ENCODE measurements at regions of chr16 and their contacts with region 1.

Region 1: DNA sequence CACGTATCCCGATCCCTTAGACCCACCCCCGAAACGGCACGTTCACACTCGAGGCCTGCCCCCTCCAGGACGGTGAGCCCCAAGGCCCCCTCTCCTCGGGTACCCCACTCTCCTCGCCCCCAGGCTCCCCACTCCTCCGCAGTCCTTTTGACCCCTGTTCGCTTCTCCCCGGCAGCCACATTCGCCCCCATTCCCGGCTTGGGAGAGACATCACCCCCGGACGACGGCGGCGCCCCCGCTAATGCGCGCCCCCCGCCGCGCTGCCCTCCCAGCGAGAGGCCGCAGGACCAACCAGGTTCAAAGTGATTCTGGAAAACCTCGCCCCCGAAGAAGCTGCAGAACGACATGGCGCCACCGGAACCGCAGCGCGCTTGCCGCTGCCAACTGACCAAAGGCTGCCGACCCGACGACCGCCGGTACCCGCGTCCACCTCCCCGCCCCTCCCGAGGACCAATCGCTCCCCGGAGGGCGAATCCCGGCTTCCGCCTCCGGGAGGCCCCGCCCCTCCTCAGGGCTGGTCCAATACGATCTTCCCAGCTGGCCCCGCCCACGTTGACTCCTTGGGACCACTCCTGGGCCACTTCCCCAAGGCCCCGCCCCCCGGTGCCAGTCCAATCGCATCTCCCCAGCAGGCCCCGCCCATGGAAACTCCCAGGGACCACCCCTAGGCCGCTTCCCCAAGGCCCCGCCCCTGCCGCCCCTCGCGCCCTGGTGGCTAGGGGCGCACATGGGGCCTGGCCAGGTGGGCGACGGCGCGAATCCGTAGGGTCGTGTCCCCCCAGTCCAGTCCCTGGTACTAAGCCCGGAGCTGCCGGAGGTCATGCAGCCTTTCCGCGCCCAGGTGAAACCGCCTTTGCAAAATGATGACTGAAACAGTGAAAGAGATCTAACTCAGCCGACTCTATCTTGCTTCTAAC is at the start of gene MSRB1:
- DNase-seq: peak; percentile 98
- ATAC-seq: peak; percentile 56
- H3K4me3 ChIP-seq: peak within 1 kb of the TSS; percentile 93 to 97 (median 96)
- H3K27ac ChIP-seq: peak within 1 kb of the TSS; percentile 96
- H3K4me1 ChIP-seq: peaks cover 68% of the 10 kb centered on the region
- H3K27me3 ChIP-seq: peaks cover 0 to 5% of the 10 kb centered on the region in 2 experiments; a peak in 1 of 5 replicates
- CTCF ChIP-seq: peak; percentile 19; the same call in 1 of the 2 replicates
- EP300 ChIP-seq: no peak
- POLR2A ChIP-seq: peak; percentile 95
- RAD21 ChIP-seq: no peak
- total RNA-seq, gene MSRB1: 32.1 and 49.0 TPM in 2 replicates

Region 2: GRCh38 chr16:1782352-1783091 is 160.5 kb before region 1 on chr16 and contains the starts of genes NUBP2 and SPSB3:
- CTCF ChIA-PET with region 1: no interaction called
- POLR2A ChIA-PET with region 1: interaction called, 16 read pairs
- in situ Hi-C with region 1: no loop called
- intact Hi-C with region 1: no loop called
- DNase-seq: peak; percentile 99
- ATAC-seq: peak; percentile 90
- H3K4me3 ChIP-seq: peak within 1 kb of the TSS; percentile 94 to 96 (median 94)
- H3K27ac ChIP-seq: peak within 1 kb of the TSS; percentile 70
- H3K4me1 ChIP-seq: peaks cover 22% of the 10 kb centered on the region
- H3K27me3 ChIP-seq: peaks cover 0 to 2% of the 10 kb centered on the region in 2 experiments; a peak in 1 of 5 replicates
- CTCF ChIP-seq: no peak
- EP300 ChIP-seq: no peak
- POLR2A ChIP-seq: peak; percentile 41 to 74; a peak in 3 of 4 replicates
- RAD21 ChIP-seq: no peak; the same call in 1 of the 2 replicates
- total RNA-seq, gene NUBP2: 43.8 and 61.5 TPM in 2 replicates
- total RNA-seq, gene SPSB3: 8.2 and 13.2 TPM in 2 replicates

Region 3: GRCh38 chr16:1826691-1827575 is 116.1 kb before region 1 on chr16 and contains the starts of genes FAHD1 and HAGH:
- CTCF ChIA-PET with region 1: no interaction called
- POLR2A ChIA-PET with region 1: interaction called, 49 read pairs
- in situ Hi-C with region 1: no loop called
- intact Hi-C with region 1: no loop called
- DNase-seq: peak; percentile 88
- ATAC-seq: peak; percentile 77
- H3K4me3 ChIP-seq: peak within 1 kb of the TSS; percentile 72 to 97 (median 92)
- H3K27ac ChIP-seq: peak within 1 kb of the TSS; percentile 93
- H3K4me1 ChIP-seq: peaks cover 54% of the 10 kb centered on the region
- H3K27me3 ChIP-seq: no peaks in the 10 kb centered on the region; a peak in 1 of 5 replicates
- CTCF ChIP-seq: 0 out of 2 replicates have a peak, but pooled peaks have one; percentile 3
- EP300 ChIP-seq: peak; percentile 35 to 36; a peak in 2 of 4 replicates
- POLR2A ChIP-seq: peak; percentile 84 to 90
- RAD21 ChIP-seq: no peak; the same call in none of the 2 replicates
- total RNA-seq, gene FAHD1: 45.3 and 55.1 TPM in 2 replicates
- total RNA-seq, gene HAGH: 55.6 and 70.4 TPM in 2 replicates

Region 4: DNA sequence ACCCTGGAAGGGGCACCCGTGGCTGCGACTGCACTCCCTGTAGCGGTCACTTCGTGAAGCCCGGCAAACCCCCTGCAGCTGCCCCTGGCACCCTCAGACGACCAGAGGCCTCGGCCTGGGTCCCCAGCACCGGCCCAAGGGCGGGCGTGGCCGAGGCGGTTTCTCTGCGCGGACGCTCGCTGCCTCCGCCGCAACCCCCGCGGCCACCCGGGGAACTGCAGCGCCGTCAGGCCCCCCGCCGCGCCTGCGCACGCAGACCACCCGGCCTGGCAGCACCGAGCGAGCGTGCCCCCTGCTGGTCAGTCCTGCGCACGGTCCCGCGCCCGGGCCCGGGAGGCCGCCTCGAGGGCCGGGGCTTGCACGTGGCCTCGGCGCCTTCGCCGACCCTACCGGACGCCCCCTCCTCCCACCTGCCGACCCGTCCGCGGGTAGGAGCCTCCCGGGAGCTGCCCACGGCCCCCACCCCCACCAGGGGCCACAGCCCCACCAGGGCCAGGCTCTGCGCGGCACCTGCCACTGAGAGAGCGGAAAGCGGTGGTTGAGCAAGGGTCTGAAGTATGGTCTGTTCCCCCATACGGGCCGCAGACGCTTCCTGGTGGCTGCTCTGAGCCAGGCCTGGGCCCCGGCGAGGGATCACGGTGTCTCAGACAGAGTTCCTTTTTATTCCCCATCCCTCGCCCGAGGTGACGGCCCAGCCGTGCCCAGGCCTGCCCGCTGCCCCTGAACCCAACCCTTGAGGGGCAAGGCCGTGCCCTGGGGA is 13.3 kb before region 1 on chr16:
- CTCF ChIA-PET with region 1: interaction called, 3 read pairs
- POLR2A ChIA-PET with region 1: interaction called, 34 read pairs
- in situ Hi-C with region 1: no loop called
- intact Hi-C with region 1: no loop called
- DNase-seq: peak; percentile 55
- ATAC-seq: peak; percentile 56
- H3K4me3 ChIP-seq: peak overlapping the region; percentile 59 to 73 (median 70)
- H3K27ac ChIP-seq: peak overlapping the region; percentile 38
- H3K4me1 ChIP-seq: peaks cover 73% of the 10 kb centered on the region
- H3K27me3 ChIP-seq: peaks cover 3 to 6% of the 10 kb centered on the region in 2 experiments; a peak in 2 of 5 replicates
- CTCF ChIP-seq: peak; percentile 90
- EP300 ChIP-seq: no peak
- POLR2A ChIP-seq: peak; percentile 46 to 49; a peak in 3 of 4 replicates
- RAD21 ChIP-seq: peak; percentile 99

Region 5: GRCh38 chr16:1959269-1960049 is 16.4 kb after region 1 on chr16 and contains the start of gene NDUFB10:
- CTCF ChIA-PET with region 1: no interaction called
- POLR2A ChIA-PET with region 1: interaction called, 139 read pairs
- in situ Hi-C with region 1: no loop called
- intact Hi-C with region 1: loop called (anchors 2 kb)
- DNase-seq: peak; percentile 80
- ATAC-seq: peak; percentile 74
- H3K4me3 ChIP-seq: peak within 1 kb of the TSS; percentile 81 to 98 (median 94)
- H3K27ac ChIP-seq: peak within 1 kb of the TSS; percentile 80
- H3K4me1 ChIP-seq: peaks cover 51% of the 10 kb centered on the region
- H3K27me3 ChIP-seq: peaks cover 0 to 5% of the 10 kb centered on the region in 2 experiments; a peak in 3 of 5 replicates
- CTCF ChIP-seq: peak; percentile 82
- EP300 ChIP-seq: no peak
- POLR2A ChIP-seq: peak; percentile 90 to 99
- RAD21 ChIP-seq: peak; percentile 80
- total RNA-seq, gene NDUFB10: 143 and 157 TPM in 2 replicates

Region 6: GRCh38 chr16:1983544-1984346 is 40.7 kb after region 1 on chr16 and contains the start of gene GFER:
- CTCF ChIA-PET with region 1: no interaction called
- POLR2A ChIA-PET with region 1: interaction called, 23 read pairs
- in situ Hi-C with region 1: no loop called
- intact Hi-C with region 1: no loop called
- DNase-seq: peak; percentile 81
- ATAC-seq: peak; percentile 82
- H3K4me3 ChIP-seq: peak within 1 kb of the TSS; percentile 81 to 93 (median 84)
- H3K27ac ChIP-seq: peak within 1 kb of the TSS; percentile 97
- H3K4me1 ChIP-seq: peaks cover 54% of the 10 kb centered on the region
- H3K27me3 ChIP-seq: no peaks in the 10 kb centered on the region
- CTCF ChIP-seq: peak; percentile 72
- EP300 ChIP-seq: peak; percentile 9 to 38; a peak in 2 of 4 replicates
- POLR2A ChIP-seq: peak; percentile 58 to 63
- RAD21 ChIP-seq: 0 out of 2 replicates have a peak, but pooled peaks have one; percentile 16
- total RNA-seq, gene GFER: 68.3 and 71.7 TPM in 2 replicates

Measured in HepG2 (cell line).